Left ventricle myocardium inferior (tissue), 1 donor: ENCODE measurements at regions of chr7 and their contacts with region 1.

Region 1: DNA sequence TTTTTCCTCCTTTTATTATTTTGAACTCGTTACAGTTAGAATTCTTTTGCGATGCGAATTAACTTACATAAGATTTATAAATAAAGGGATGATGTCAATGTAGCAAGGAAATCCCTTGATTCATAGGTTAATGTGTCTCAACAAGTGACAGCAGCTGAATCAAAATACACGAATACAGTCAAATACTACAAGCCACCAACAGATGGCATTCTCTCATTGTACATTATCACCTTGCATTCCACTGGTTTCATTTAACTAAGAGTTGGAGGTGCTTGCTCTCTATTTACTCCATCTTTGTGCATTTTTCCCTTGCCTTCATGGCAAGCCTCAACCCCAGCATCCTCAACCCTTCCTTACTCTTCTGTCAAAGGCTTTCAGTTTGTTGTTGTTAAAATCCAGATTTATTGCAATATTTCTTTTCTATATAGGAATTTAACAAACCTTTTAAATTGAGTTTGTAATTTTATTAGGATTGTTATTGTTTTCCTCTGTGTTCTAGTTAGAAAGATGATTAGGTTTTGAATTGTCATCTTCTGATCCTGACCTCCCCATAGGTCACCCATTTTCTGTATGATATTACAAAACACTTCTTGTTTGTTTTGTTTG is 78.3 kb downstream of the SLC25A40 start:
- DNase-seq: no peak
- H3K4me3 ChIP-seq: no peak overlapping the region
- H3K27ac ChIP-seq: no peak overlapping the region
- H3K4me1 ChIP-seq: no peaks in the 10 kb centered on the region
- H3K27me3 ChIP-seq: no peaks in the 10 kb centered on the region
- CTCF ChIP-seq: peak; percentile 71

Region 2: GRCh38 chr7:87886875-87887274 is 89.0 kb after region 1 on chr7:
- intact Hi-C with region 1: loop called (anchors 2 kb)
- DNase-seq: no peak
- H3K4me3 ChIP-seq: no peak overlapping the region
- H3K27ac ChIP-seq: no peak overlapping the region
- H3K4me1 ChIP-seq: no peaks in the 10 kb centered on the region
- H3K27me3 ChIP-seq: no peaks in the 10 kb centered on the region
- CTCF ChIP-seq: peak; percentile 58

Region 3: GRCh38 chr7:88219781-88220747 is 422.2 kb after region 1 on chr7 and contains the start of gene SRI:
- intact Hi-C with region 1: no loop called
- DNase-seq: peak; percentile 88
- H3K4me3 ChIP-seq: peak within 1 kb of the TSS; percentile 100
- H3K27ac ChIP-seq: peak within 1 kb of the TSS; percentile 97
- H3K4me1 ChIP-seq: peaks cover 46% of the 10 kb centered on the region
- H3K27me3 ChIP-seq: no peaks in the 10 kb centered on the region
- CTCF ChIP-seq: peak; percentile 95
- total RNA-seq, gene SRI: 76.1 TPM